ENCODE measurements at regions of chr6 and their contacts with region 1.

Region 1: GRCh38 chr6:35139908-35140655 is 1.1 kb downstream of the TCP11 start:
- DNase-seq: peak in 2 of 4 donors; percentile 67 to 84
- ATAC-seq: peak; percentile 80
- H3K4me3 ChIP-seq: no peak overlapping the region
- H3K27ac ChIP-seq: no peak overlapping the region
- H3K4me1 ChIP-seq: peaks cover 4 to 16% of the 10 kb centered on the region in 2 donors
- H3K27me3 ChIP-seq: peaks cover 0 to 13% of the 10 kb centered on the region in 2 donors
- CTCF ChIP-seq: peak; percentile 64 to 82

Region 2: GRCh38 chr6:35071347-35071994 is 68.6 kb before region 1 on chr6:
- intact Hi-C with region 1: no loop called
- DNase-seq: no peak
- ATAC-seq: no peak
- H3K4me3 ChIP-seq: no peak overlapping the region
- H3K27ac ChIP-seq: no peak overlapping the region
- H3K4me1 ChIP-seq: no peaks in the 10 kb centered on the region
- H3K27me3 ChIP-seq: no peaks in the 10 kb centered on the region
- CTCF ChIP-seq: no peak

Region 3: GRCh38 chr6:35240840-35241801 is 101.0 kb after region 1 on chr6:
- intact Hi-C with region 1: loop called in 1 of 2 experiments (anchors 10 kb)
- DNase-seq: peak; percentile 60 to 90 (median 76)
- ATAC-seq: peak; percentile 89
- H3K4me3 ChIP-seq: no peak overlapping the region
- H3K27ac ChIP-seq: peak overlapping the region in 1 of 2 donors; percentile 48
- H3K4me1 ChIP-seq: peaks cover 13 to 30% of the 10 kb centered on the region in 2 donors
- H3K27me3 ChIP-seq: no peaks in the 10 kb centered on the region
- CTCF ChIP-seq: peak; percentile 92 to 95

Region 4: DNA sequence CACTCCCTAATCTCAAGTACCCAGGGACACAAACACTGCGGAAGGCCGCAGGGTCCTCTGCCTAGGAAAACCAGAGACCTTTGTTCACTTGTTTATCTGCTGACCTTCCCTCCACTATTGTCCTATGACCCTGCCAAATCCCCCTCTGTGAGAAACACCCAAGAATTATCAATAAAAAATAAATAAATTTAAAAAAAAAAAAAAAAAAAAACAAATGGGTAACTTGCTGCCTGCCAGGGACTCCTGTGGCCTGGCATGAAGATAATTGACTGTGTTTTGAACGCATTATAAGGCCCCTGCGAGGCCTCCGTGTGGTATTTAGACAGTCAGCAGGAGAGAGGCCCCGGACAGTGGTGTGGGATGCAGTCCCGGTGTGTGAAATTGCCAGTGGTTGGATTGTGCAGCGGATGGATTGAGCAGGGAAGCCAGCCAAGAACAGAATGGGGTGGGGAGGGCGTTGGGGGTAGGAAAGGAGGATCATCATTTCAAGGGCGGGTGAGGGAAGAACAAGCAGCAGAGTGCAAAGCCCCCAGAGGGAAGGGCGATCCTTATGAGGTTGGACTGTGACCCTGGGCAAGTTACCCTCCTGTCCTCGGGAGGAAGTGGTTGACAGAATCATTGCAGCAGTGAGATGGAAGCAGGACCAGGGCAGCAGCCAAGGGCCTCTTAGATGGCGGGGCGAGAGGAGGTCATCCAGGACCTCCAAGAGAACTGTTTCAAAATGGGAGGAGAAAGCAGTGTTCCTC is 245.5 kb after region 1 on chr6:
- intact Hi-C with region 1: no loop called
- DNase-seq: no peak
- ATAC-seq: peak; percentile 40
- H3K4me3 ChIP-seq: no peak overlapping the region
- H3K27ac ChIP-seq: no peak overlapping the region
- H3K4me1 ChIP-seq: no peaks in the 10 kb centered on the region
- H3K27me3 ChIP-seq: no peaks in the 10 kb centered on the region
- CTCF ChIP-seq: no peak

Region 5: GRCh38 chr6:35569011-35569461 is 429.0 kb after region 1 on chr6:
- intact Hi-C with region 1: no loop called
- DNase-seq: peak in 1 of 4 donors; percentile 80
- ATAC-seq: peak; percentile 60
- H3K4me3 ChIP-seq: no peak overlapping the region
- H3K27ac ChIP-seq: no peak overlapping the region
- H3K4me1 ChIP-seq: no peaks in the 10 kb centered on the region
- H3K27me3 ChIP-seq: no peaks in the 10 kb centered on the region
- CTCF ChIP-seq: peak in 1 of 2 donors; percentile 27